B cell (primary cell): ENCODE measurements at regions of chr1 and their contacts with region 1.

Region 1: GRCh38 chr1:150979092-150980056 is 2.7 kb upstream of the ANXA9 start:
- DNase-seq: peak; percentile 92
- ATAC-seq: peak; percentile 56
- H3K4me3 ChIP-seq: peak overlapping the region; percentile 38 to 72 (median 50)
- H3K4me3 Mint-ChIP-seq: peak overlapping the region; percentile 79
- H3K27ac ChIP-seq: no peak overlapping the region
- H3K27ac Mint-ChIP-seq: peak overlapping the region; percentile 88
- H3K4me1 ChIP-seq: peaks cover 22 to 35% of the 10 kb centered on the region in 2 donors
- H3K4me1 Mint-ChIP-seq: peaks cover 31% of the 10 kb centered on the region
- H3K27me3 ChIP-seq: no peaks in the 10 kb centered on the region
- H3K27me3 Mint-ChIP-seq: no peaks in the 10 kb centered on the region
- CTCF ChIP-seq: peak; percentile 100

Region 2: GRCh38 chr1:150629115-150629928 is 350.1 kb before region 1 on chr1 and contains the start of gene ENSA:
- CTCF ChIA-PET with region 1: no interaction called
- POLR2A ChIA-PET with region 1: no interaction called
- intact Hi-C with region 1: loop called (anchors 1 kb)
- DNase-seq: peak; percentile 99
- ATAC-seq: peak; percentile 85
- H3K4me3 ChIP-seq: peak within 1 kb of the TSS; percentile 74 to 93 (median 80)
- H3K4me3 Mint-ChIP-seq: no peak within 1 kb of the TSS
- H3K27ac ChIP-seq: peak within 1 kb of the TSS; percentile 95 to 96
- H3K27ac Mint-ChIP-seq: no peak within 1 kb of the TSS
- H3K4me1 ChIP-seq: peaks cover 19 to 21% of the 10 kb centered on the region in 2 donors
- H3K4me1 Mint-ChIP-seq: peaks cover 18% of the 10 kb centered on the region
- H3K27me3 ChIP-seq: no peaks in the 10 kb centered on the region
- H3K27me3 Mint-ChIP-seq: no peaks in the 10 kb centered on the region
- CTCF ChIP-seq: no peak
- total RNA-seq, gene ENSA: 115 and 119 TPM in 2 replicates

Region 3: DNA sequence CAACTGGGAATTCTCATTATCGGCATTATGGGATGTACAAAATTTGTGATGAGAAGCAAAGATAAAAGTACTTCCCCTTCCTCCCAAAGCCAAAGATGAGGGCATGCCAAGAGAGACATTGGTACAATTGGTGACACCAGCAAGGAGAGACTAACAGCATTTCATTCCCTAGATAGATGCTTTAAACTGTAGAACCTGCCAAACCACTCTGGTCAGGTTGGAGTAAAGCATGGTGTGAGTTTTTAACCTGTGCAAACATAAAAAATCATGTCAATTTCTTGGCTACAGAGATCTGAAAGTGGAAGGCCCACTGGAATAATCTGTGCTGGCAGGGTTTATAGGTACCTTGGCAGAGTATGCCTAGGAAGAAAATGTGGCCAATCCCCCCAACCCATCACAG is 73.0 kb before region 1 on chr1:
- CTCF ChIA-PET with region 1: no interaction called
- POLR2A ChIA-PET with region 1: no interaction called
- intact Hi-C with region 1: no loop called
- DNase-seq: no peak
- ATAC-seq: no peak
- H3K4me3 ChIP-seq: no peak overlapping the region
- H3K4me3 Mint-ChIP-seq: no peak overlapping the region
- H3K27ac ChIP-seq: no peak overlapping the region
- H3K27ac Mint-ChIP-seq: no peak overlapping the region
- H3K4me1 ChIP-seq: peaks cover 6 to 9% of the 10 kb centered on the region in 2 donors
- H3K4me1 Mint-ChIP-seq: peaks cover 7% of the 10 kb centered on the region
- H3K27me3 ChIP-seq: no peaks in the 10 kb centered on the region
- H3K27me3 Mint-ChIP-seq: no peaks in the 10 kb centered on the region
- CTCF ChIP-seq: no peak

Region 4: GRCh38 chr1:150925816-150926741 is 53.3 kb before region 1 on chr1 and contains the start of gene SETDB1:
- CTCF ChIA-PET with region 1: interaction called, 3 read pairs
- POLR2A ChIA-PET with region 1: no interaction called
- intact Hi-C with region 1: loop called (anchors 1 kb)
- DNase-seq: peak; percentile 97
- ATAC-seq: peak; percentile 93
- H3K4me3 ChIP-seq: peak within 1 kb of the TSS; percentile 82 to 96 (median 90)
- H3K4me3 Mint-ChIP-seq: peak within 1 kb of the TSS; percentile 98
- H3K27ac ChIP-seq: peak within 1 kb of the TSS; percentile 93 to 96
- H3K27ac Mint-ChIP-seq: peak within 1 kb of the TSS; percentile 98
- H3K4me1 ChIP-seq: peaks cover 17 to 19% of the 10 kb centered on the region in 2 donors
- H3K4me1 Mint-ChIP-seq: peaks cover 31% of the 10 kb centered on the region
- H3K27me3 ChIP-seq: no peaks in the 10 kb centered on the region
- H3K27me3 Mint-ChIP-seq: no peaks in the 10 kb centered on the region
- CTCF ChIP-seq: no peak
- total RNA-seq, gene SETDB1: 115 and 133 TPM in 2 replicates

Region 5: DNA sequence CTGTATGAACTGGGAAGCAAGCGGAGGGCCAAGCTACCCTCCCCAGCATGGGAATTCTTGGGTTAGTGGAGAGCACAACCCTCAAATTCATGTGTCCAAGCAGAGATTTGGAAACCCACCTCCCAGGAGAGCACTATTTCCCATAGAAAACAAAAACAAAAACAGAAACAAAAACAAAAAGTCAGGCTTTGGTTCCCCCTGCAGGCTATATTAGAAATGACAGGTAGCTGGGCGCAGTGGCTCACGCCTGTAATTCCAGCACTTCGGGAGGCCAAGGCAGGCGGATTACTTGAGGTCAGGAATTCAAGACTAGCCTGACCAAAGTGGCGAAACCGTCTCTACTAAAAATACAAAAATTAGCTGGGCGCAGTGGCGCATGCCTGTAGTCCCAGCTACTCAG is 16.5 kb after region 1 on chr1:
- CTCF ChIA-PET with region 1: interaction called, 35 read pairs
- POLR2A ChIA-PET with region 1: interaction called, 3 read pairs
- intact Hi-C with region 1: no loop called
- DNase-seq: peak; percentile 60
- ATAC-seq: peak; percentile 39
- H3K4me3 ChIP-seq: no peak overlapping the region
- H3K4me3 Mint-ChIP-seq: no peak overlapping the region
- H3K27ac ChIP-seq: no peak overlapping the region
- H3K27ac Mint-ChIP-seq: no peak overlapping the region
- H3K4me1 ChIP-seq: peaks cover 0 to 3% of the 10 kb centered on the region in 2 donors
- H3K4me1 Mint-ChIP-seq: peaks cover 4% of the 10 kb centered on the region
- H3K27me3 ChIP-seq: no peaks in the 10 kb centered on the region
- H3K27me3 Mint-ChIP-seq: no peaks in the 10 kb centered on the region
- CTCF ChIP-seq: peak; percentile 88

Region 6: GRCh38 chr1:151146412-151147140 is 167.2 kb after region 1 on chr1 and contains the start of gene SEMA6C:
- CTCF ChIA-PET with region 1: no interaction called
- POLR2A ChIA-PET with region 1: no interaction called
- intact Hi-C with region 1: loop called (anchors 1 kb)
- DNase-seq: peak; percentile 86
- ATAC-seq: peak; percentile 100
- H3K4me3 ChIP-seq: peak within 1 kb of the TSS; percentile 59 to 86 (median 84)
- H3K4me3 Mint-ChIP-seq: peak within 1 kb of the TSS; percentile 94
- H3K27ac ChIP-seq: peak within 1 kb of the TSS in 1 of 2 donors; percentile 43
- H3K27ac Mint-ChIP-seq: peak within 1 kb of the TSS; percentile 20
- H3K4me1 ChIP-seq: peaks cover 15 to 19% of the 10 kb centered on the region in 2 donors
- H3K4me1 Mint-ChIP-seq: peaks cover 23% of the 10 kb centered on the region
- H3K27me3 ChIP-seq: peaks cover 0 to 20% (median 8%) of the 10 kb centered on the region in 4 experiments
- H3K27me3 Mint-ChIP-seq: peaks cover 9% of the 10 kb centered on the region
- CTCF ChIP-seq: no peak
- total RNA-seq, gene SEMA6C: 0.86 and 1.5 TPM in 2 replicates